Naive thymus-derived CD8-positive, alpha-beta T cell (primary cell): ENCODE measurements at regions of chr11 and their contacts with region 1.

Region 1: DNA sequence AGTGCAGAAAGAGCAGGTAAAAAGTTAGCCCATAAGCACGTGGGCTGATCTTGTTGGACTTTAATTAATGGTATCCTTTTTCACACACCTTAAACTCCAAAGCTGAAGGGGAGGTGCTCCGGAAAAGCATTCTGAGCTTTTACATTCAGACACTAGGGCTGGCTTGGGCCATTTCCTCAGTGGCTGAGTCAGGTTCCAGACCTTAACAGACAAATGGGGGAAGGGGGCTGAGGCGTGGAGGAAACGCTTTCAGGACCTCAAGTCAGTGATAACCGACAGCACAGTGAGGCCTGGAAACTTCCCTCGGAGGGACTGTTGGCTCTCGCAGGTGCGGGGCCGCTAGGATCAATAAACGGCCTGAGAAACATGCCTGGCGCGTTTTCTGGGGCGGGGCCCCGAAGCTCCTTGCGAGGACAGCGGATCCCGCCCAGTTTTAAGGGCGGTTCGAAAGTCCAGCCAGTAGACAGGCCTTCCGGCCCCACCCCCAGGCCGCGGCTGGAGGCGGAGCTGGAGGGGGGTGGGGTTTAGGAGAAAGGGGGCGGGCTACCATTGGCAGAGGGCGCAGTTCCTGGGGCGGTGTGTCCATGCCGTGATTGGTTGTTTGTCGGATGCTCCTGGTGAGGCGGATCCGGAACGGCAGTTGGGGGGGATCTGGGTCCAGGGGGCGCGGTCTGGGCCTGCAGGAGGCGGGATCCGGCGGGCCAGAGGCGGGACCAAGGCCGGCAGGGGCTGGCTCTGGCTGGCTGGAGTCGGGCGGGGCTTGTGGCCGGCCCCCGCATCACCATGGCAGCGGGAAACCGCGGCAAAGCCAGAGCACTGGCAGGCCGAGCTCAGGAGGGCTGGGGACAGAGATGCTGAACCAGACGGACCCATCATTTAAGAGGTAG is 8.0 kb downstream of the C11orf52 start:
- DNase-seq: peak; percentile 90 to 98 (median 95)
- ATAC-seq: peak; percentile 88 to 89
- H3K4me3 Mint-ChIP-seq: peak overlapping the region; percentile 82 to 91 (median 87)
- H3K27ac Mint-ChIP-seq: peak overlapping the region; percentile 70 to 96 (median 95)
- H3K4me1 Mint-ChIP-seq: peaks cover 2 to 17% (median 16%) of the 10 kb centered on the region in 4 donors
- H3K27me3 Mint-ChIP-seq: no peaks in the 10 kb centered on the region

Region 2: DNA sequence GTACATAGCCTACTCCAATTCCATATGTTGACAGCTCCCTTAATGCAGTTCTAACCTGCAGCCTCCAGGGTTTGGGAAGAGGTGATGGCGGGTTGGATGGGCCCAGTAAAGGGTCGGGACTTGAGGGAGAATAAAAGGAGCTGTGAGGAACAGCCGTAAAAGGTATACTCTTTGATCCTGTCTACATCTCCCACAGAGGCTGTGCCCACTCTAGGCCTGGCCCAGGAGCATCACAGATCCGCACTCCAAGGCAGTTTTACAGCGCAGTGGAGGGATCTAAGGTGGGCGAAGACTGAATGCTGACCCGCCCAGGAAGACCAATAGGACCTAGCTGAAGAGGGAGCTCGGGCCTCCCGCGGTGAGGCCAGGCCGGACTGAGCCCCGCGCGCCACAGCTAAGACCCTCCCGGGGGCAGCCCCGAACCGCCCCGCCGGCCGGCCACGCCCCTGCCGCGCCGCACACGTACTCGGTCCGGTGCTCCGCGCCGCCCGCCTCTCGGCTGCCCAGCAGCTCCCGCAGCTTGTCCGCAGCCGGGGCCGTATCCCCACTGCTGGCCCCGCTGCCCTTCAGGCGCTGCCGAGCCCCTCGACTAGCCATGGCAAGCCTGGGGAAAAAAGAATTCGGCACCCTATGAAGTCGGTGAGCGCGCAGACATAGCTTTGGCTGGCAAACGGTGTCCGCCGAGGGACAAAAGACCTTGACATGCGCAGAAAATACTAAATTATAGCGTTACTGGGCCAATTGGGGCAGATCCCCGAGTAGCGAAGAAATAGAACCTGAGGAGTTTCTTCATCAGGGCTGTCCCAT is 55.7 kb before region 1 on chr11 and contains the start of gene ALG9:
- POLR2A ChIA-PET with region 1: interaction called, 23 read pairs
- DNase-seq: peak; percentile 76 to 97 (median 88)
- ATAC-seq: peak; percentile 87 to 91
- H3K4me3 Mint-ChIP-seq: peak within 1 kb of the TSS; percentile 91 to 96 (median 93)
- H3K27ac Mint-ChIP-seq: peak within 1 kb of the TSS; percentile 87 to 98 (median 95)
- H3K4me1 Mint-ChIP-seq: peaks cover 12 to 36% (median 26%) of the 10 kb centered on the region in 4 donors
- H3K27me3 Mint-ChIP-seq: no peaks in the 10 kb centered on the region
- polyA plus RNA-seq, gene ALG9: 6.4 to 13.1 (median 11.9) TPM

Region 3: DNA sequence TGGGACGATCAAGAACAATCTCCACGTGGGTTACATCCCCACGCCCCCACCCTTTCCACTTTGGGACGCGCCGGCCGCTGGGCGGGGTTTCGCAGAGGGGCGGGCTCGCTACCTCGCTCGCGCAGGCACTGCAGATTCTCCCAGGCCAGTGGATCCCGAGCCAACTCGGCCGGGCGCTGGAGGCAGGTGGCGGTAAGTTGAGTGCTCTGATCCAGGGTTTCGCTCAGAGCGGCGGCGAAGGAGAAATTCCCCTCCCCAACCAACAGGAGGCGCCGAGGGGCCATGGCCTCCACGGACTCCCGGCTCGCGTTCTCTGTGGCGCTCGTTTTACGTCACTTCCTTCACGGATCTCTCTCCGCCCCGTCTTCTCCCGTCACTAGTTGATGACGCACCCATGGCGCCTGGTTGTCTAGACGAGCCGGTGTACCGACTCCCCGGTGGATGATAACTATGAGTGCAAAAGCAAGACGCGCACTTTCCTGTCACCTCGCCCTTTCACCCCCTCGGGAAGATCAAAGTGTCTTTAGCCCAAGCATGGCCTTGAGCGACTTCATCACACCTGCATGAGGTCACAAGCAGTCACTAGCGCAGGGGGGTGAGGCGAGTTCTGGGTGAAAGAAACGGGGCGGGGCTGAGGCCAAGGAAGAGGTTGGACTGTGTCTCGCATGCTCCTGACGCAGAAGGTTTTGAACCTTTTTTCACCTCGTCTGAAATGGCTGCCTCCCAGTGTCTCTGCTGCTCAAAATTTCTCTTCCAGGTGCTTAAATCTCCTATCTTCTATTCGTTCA is 47.7 kb before region 1 on chr11 and contains the starts of genes CFAP68 and FDXACB1:
- POLR2A ChIA-PET with region 1: interaction called, 13 read pairs
- DNase-seq: peak; percentile 87 to 100 (median 96)
- ATAC-seq: peak; percentile 85 to 89
- H3K4me3 Mint-ChIP-seq: peak within 1 kb of the TSS; percentile 84 to 100 (median 97)
- H3K27ac Mint-ChIP-seq: peak within 1 kb of the TSS; percentile 96 to 100 (median 100)
- H3K4me1 Mint-ChIP-seq: peaks cover 9 to 28% (median 25%) of the 10 kb centered on the region in 4 donors
- H3K27me3 Mint-ChIP-seq: no peaks in the 10 kb centered on the region
- polyA plus RNA-seq, gene CFAP68: 29.5 to 33.5 (median 33.4) TPM
- polyA plus RNA-seq, gene FDXACB1: 7.5 to 8.3 (median 7.6) TPM

Region 4: DNA sequence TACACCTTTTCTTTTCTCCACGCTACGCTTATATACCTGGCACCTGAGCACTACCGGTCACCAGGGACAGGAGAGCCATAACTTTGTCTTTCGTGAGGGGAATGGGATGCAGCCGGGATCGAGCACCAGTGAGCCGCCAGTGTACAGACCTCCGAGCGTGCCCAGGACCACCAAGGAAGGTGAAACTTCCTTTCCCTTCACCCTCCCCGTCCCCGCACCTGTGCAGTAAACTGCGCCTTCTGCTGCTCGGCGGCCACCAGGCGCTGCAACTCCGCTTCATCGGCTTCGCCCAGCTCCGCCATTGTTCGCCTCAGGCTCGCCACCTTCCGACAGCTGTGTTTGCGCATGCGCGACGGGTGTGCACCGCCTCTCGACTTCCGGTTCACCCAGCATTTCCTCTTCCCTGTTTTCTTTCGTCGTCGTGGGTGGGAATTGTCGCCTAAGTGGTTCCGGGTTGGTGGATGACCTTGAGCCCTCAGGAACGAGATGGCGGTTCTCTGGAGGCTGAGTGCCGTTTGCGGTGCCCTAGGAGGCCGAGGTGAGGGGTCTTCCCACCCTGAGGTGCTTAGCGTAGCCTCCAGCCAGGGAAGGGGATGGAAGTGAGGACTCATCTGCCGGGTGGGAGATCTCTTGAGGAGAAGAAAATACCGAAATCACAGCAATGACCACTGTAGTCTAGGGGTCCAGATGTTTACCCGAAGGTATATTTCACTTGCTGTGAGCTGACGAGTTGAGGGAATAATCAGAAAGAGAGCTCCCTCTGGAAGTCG is 159.9 kb after region 1 on chr11 and contains the starts of genes SDHD and TIMM8B:
- POLR2A ChIA-PET with region 1: interaction called, 10 read pairs
- DNase-seq: peak; percentile 93 to 98 (median 96)
- ATAC-seq: peak; percentile 92 to 94
- H3K4me3 Mint-ChIP-seq: peak within 1 kb of the TSS; percentile 93 to 100 (median 99)
- H3K27ac Mint-ChIP-seq: peak within 1 kb of the TSS; percentile 97 to 99 (median 99)
- H3K4me1 Mint-ChIP-seq: peaks cover 47 to 58% (median 52%) of the 10 kb centered on the region in 4 donors
- H3K27me3 Mint-ChIP-seq: peaks cover 0 to 3% (median 0%) of the 10 kb centered on the region in 5 donors
- polyA plus RNA-seq, gene SDHD: 167 to 191 (median 181) TPM
- polyA plus RNA-seq, gene TIMM8B: 58.0 to 75.2 (median 69.1) TPM